Heart right ventricle (tissue), 16 donors: ENCODE measurements at regions of chr17 and their contacts with region 1.

Region 1: GRCh38 chr17:34254651-34255380 is at the start of gene CCL2:
- DNase-seq: peak; percentile 60 to 87
- ATAC-seq: peak; percentile 38 to 79 (median 66)
- H3K4me3 ChIP-seq: peak within 1 kb of the TSS; percentile 18 to 67 (median 52)
- H3K27ac ChIP-seq: peak within 1 kb of the TSS in 9 of 10 donors; percentile 58 to 93 (median 82)
- H3K4me1 ChIP-seq: peaks cover 16 to 89% (median 67%) of the 10 kb centered on the region in 9 donors
- H3K27me3 ChIP-seq: no peaks in the 10 kb centered on the region
- CTCF ChIP-seq: no peak
- total RNA-seq, gene CCL2: 2.9 to 264 (median 38.5) TPM

Region 2: DNA sequence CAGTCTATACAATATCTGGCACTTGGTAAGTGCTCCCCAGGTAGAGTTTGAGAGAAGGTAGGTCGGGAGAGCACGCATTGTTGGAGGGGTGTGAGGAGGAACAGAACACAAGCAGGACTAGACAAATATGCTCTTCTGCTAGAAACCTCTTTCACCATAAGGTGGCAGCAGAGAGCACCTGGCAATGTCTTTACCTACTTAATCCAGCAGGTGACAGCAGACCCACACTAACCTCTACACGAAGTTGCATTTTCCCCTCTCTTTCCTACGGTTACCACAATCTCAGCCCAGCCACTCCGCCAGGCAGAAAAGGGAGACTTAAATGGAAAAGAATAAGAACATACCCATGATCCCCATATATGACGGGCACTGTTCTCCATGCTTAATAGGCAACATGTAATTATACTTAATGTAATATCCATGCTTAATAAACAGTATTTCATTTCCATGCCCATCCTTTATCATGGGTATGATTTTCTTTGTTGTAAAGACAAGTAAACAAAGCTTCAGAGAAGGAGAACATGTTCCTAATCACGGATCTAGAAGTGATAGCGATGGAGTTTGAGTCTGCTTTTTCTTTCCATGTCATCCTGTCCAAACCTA is 54.8 kb before region 1 on chr17:
- intact Hi-C with region 1: loop called in 3 of 10 experiments (anchors 2 to 10 kb)
- DNase-seq: peak; percentile 38 to 81
- ATAC-seq: peak; percentile 88 to 97 (median 90)
- H3K4me3 ChIP-seq: no peak overlapping the region
- H3K27ac ChIP-seq: peak overlapping the region in 2 of 10 donors; percentile 30 to 72
- H3K4me1 ChIP-seq: peaks cover 0 to 28% (median 6%) of the 10 kb centered on the region in 9 donors
- H3K27me3 ChIP-seq: peaks cover 0 to 37% (median 3%) of the 10 kb centered on the region in 7 donors
- CTCF ChIP-seq: peak; percentile 100

Region 3: GRCh38 chr17:34235389-34236028 is 19.3 kb before region 1 on chr17:
- intact Hi-C with region 1: loop called in 2 of 10 experiments (anchors 2 kb)
- DNase-seq: peak; percentile 65 to 85
- ATAC-seq: peak; percentile 88 to 93 (median 90)
- H3K4me3 ChIP-seq: no peak overlapping the region
- H3K27ac ChIP-seq: peak overlapping the region in 9 of 10 donors; percentile 65 to 92 (median 80)
- H3K4me1 ChIP-seq: peaks cover 10 to 79% (median 71%) of the 10 kb centered on the region in 9 donors
- H3K27me3 ChIP-seq: no peaks in the 10 kb centered on the region
- CTCF ChIP-seq: no peak

Region 4: GRCh38 chr17:34300652-34301370 is 46.0 kb after region 1 on chr17:
- intact Hi-C with region 1: loop called in 6 of 10 experiments (anchors 5 kb)
- DNase-seq: no peak
- ATAC-seq: peak in 7 of 8 donors; percentile 39 to 82 (median 51)
- H3K4me3 ChIP-seq: no peak overlapping the region
- H3K27ac ChIP-seq: peak overlapping the region in 9 of 10 donors; percentile 30 to 78 (median 49)
- H3K4me1 ChIP-seq: peaks cover 6 to 41% (median 26%) of the 10 kb centered on the region in 9 donors
- H3K27me3 ChIP-seq: no peaks in the 10 kb centered on the region
- CTCF ChIP-seq: no peak

Region 5: GRCh38 chr17:34314279-34314678 is 59.5 kb after region 1 on chr17:
- intact Hi-C with region 1: loop called in 3 of 10 experiments (anchors 5 kb)
- DNase-seq: peak in 1 of 2 donors; percentile 29
- ATAC-seq: peak in 7 of 8 donors; percentile 55 to 65 (median 56)
- H3K4me3 ChIP-seq: no peak overlapping the region
- H3K27ac ChIP-seq: peak overlapping the region; percentile 14 to 83 (median 68)
- H3K4me1 ChIP-seq: peaks cover under 1 to 56% (median 26%) of the 10 kb centered on the region in 9 donors
- H3K27me3 ChIP-seq: peaks cover 0 to 5% (median 0%) of the 10 kb centered on the region in 7 donors
- CTCF ChIP-seq: no peak

Region 6: GRCh38 chr17:34613064-34614019 is 358.5 kb after region 1 on chr17:
- intact Hi-C with region 1: no loop called
- DNase-seq: no peak
- ATAC-seq: no peak
- H3K4me3 ChIP-seq: no peak overlapping the region
- H3K27ac ChIP-seq: no peak overlapping the region
- H3K4me1 ChIP-seq: no peaks in the 10 kb centered on the region
- H3K27me3 ChIP-seq: peaks cover 0 to 87% (median 78%) of the 10 kb centered on the region in 7 donors
- CTCF ChIP-seq: no peak